ENCODE measurements at regions of chr11 and their contacts with region 1.

Region 1: GRCh38 chr11:119474682-119475596 is 52.0 kb upstream of the THY1 start:
- DNase-seq: peak; percentile 77
- ATAC-seq: peak; percentile 83
- H3K4me3 Mint-ChIP-seq: no peak overlapping the region
- H3K27ac Mint-ChIP-seq: no peak overlapping the region
- H3K4me1 Mint-ChIP-seq: no peaks in the 10 kb centered on the region
- H3K27me3 Mint-ChIP-seq: peaks cover 21% of the 10 kb centered on the region

Region 2: DNA sequence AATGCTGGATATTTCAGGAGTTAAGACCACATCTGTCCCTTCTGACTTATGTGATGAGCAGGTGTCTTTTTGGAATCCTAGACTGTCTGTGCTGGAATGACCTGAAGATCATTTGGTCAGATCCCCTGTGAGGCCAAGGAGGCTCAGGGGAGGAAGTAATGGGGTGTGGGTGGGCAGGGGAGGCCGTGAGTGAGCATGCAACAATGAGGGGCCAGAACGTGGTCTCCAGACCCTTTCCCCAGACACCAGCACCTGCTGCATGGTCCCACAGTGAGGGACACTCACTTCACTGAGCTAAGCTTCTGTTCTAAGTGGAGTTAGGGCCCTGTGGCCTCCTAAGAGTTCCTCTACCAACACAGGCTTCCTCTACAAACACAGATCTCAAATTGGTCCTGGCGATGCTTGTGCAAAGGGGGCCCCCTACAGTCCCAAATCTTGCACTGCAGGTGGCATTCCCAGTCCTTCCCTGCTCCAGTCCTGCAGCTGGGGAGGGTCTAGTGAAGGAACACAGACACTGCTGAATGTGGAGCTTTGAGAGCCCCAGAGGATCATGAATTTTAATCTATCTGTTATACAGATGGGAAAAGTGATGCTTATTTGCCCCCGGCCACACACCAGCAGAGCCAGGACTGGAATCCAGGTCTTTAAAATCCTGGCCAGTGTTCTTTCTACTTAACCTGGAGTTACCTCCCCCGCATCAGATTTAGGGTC is 100.9 kb before region 1 on chr11:
- CTCF ChIA-PET with region 1: interaction called, 12 read pairs
- POLR2A ChIA-PET with region 1: no interaction called
- intact Hi-C with region 1: no loop called
- DNase-seq: peak; percentile 71
- ATAC-seq: peak; percentile 55
- H3K4me3 Mint-ChIP-seq: no peak overlapping the region
- H3K27ac Mint-ChIP-seq: no peak overlapping the region
- H3K4me1 Mint-ChIP-seq: peaks cover 6% of the 10 kb centered on the region
- H3K27me3 Mint-ChIP-seq: peaks cover 2% of the 10 kb centered on the region

Region 3: DNA sequence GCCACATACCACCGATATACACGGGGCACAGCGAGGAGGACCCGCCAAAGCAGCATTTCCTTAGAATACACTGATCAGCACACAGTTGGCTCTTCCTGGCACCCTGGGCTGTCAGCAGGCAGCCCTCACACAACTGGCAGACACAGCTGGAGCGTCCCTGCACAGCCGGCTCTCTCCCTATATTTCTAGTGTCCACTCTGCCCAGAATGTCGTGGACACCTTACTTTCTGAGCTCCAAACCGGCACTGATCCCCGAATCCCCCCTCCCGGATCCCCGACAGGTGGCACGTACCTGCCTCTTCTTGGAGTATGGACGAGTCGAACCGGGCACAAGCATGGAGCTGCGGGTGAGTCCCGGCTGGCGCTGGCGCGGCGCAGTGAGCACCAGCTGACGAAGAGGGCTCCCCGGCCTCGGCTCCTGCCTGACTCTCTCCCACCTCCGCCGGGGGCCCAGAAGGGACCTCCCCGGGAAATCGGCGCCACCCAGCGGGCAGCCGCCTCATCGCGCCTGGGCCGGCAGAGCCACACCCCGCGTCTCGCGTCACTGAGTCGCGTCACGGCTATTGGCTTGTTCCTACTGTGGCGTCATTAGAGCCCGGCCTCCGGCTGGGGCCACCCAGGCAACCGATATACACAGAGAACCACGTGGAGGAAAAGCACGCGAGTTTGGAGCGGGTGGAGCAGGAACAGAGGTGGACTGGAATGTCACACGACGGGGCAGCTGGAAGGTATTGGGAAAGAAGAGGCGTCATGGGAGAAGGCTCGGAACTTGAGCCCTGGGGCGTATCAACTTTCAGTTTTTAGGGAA is 93.6 kb before region 1 on chr11 and contains the start of gene USP2:
- CTCF ChIA-PET with region 1: interaction called, 14 read pairs
- POLR2A ChIA-PET with region 1: no interaction called
- intact Hi-C with region 1: loop called (anchors 2 to 5 kb)
- DNase-seq: peak; percentile 98
- ATAC-seq: peak; percentile 98
- H3K4me3 Mint-ChIP-seq: no peak within 1 kb of the TSS
- H3K27ac Mint-ChIP-seq: peak within 1 kb of the TSS; percentile 18
- H3K4me1 Mint-ChIP-seq: peaks cover 7% of the 10 kb centered on the region
- H3K27me3 Mint-ChIP-seq: no peaks in the 10 kb centered on the region
- total RNA-seq, gene USP2: 0.58 to 0.71 TPM